HepG2 (cell line): ENCODE measurements at regions of chr5 and their contacts with region 1.

Region 1: DNA sequence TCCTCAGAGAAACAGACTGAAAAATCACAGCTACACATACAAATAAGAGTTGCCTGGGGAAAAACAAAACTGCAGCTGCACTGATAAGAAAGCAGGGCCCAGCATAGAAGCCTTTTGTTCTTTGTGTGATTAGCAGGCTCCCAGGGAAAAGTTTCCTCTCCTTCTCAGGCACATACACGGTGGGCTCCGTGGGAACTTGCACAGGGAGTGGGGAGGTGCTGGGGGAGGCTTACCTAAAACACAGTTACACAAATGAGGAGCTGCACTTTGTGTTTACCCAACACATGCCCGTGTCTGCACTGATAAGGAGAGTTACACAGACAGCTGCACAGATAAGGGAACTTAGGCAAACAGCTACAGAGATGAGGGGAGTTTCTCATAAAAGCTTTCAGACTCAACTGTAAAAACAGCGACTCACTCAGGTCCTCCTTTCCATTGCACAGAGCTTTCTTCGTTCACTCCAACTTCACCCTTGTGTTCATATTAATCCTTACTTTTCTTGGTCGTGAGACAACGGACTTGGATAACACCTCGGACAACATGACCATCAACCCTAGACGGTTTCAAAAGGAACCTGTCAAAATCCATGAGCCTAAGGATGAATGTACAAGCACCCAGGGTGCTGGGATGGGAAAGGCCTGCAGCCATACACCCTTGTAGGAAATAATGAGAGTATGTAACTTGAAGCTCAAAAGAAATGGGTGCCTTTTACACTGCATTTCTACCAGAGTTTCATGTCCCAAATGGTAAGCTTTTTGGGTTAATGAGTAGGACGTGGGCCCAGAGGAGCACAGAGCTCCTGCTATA is 50.8 kb downstream of the SERINC5 start:
- DNase-seq: peak; percentile 95
- ATAC-seq: peak; percentile 95
- H3K4me3 ChIP-seq: peak overlapping the region; percentile 5 to 39 (median 19); a peak in 2 of 6 replicates
- H3K27ac ChIP-seq: peak overlapping the region; percentile 58
- H3K4me1 ChIP-seq: peaks cover 66% of the 10 kb centered on the region
- H3K27me3 ChIP-seq: no peaks in the 10 kb centered on the region
- CTCF ChIP-seq: peak; percentile 64
- EP300 ChIP-seq: peak in 1 of 2 experiments; percentile 91; a peak in 3 of 4 replicates
- POLR2A ChIP-seq: no peak
- RAD21 ChIP-seq: peak; percentile 46; the same call in 1 of the 2 replicates

Region 2: DNA sequence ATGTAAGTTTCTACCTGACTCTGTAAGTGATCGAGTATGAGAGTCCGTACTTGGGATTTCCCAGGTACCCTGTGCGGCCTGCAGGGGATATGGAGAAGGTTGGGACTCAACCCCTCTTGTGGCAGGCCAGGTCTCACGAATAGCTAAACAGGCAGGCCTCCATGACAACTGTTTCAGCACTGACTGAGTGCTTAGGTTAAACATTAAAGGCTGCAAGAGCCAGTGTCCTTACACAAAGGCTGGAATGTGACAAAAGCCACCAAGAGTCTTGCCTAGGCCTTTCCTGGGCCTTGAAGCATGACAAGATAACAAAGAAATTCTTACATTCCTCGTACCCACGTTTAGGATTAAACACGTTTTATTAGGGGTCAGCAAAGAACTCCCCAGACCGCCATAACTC is 111.2 kb before region 1 on chr5:
- CTCF ChIA-PET with region 1: no interaction called
- POLR2A ChIA-PET with region 1: interaction called, 4 read pairs
- in situ Hi-C with region 1: no loop called
- intact Hi-C with region 1: loop called (anchors 1 kb)
- DNase-seq: peak; percentile 91
- ATAC-seq: peak; percentile 95
- H3K4me3 ChIP-seq: 0 out of 6 replicates have a peak overlapping the region, but pooled peaks of 1 of the 3 experiments have one; percentile 13
- H3K27ac ChIP-seq: peak overlapping the region; percentile 68
- H3K4me1 ChIP-seq: peaks cover 60% of the 10 kb centered on the region
- H3K27me3 ChIP-seq: 0 out of 5 replicates have a peak, but pooled peaks cover 0 to 2% of the 10 kb centered on the region in 2 experiments
- CTCF ChIP-seq: peak; percentile 48
- EP300 ChIP-seq: peak in 1 of 2 experiments; percentile 17; a peak in 1 of 4 replicates
- POLR2A ChIP-seq: no peak
- RAD21 ChIP-seq: peak; percentile 67

Region 3: DNA sequence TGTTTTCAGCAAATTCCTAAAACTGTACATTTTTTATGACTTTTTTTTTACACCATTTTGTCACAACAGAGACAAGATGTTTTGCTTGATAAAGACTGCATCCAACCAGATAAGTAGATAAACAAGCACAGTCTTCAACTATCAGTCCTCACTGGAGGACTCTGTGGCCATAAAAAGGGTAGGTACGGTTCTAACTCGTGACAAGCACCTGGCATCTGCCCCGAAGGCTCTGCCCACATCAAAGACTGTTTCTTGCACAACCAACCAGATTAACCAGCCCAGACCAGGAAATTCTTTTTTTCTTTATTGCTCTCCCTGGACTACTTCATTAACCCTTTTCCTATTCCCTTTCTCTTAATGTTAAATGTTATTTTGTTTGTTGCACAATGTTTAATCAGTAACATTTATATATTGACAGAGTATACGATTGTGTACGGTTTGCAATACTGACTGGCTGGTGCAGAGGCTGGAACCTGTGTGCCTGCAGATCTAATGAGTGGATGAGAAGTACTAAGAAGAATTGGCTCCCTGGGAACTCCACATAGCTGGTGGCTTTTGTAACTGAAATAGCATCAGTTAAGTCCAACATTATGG is 23.3 kb before region 1 on chr5:
- CTCF ChIA-PET with region 1: no interaction called
- POLR2A ChIA-PET with region 1: interaction called, 23 read pairs
- in situ Hi-C with region 1: no loop called
- intact Hi-C with region 1: loop called (anchors 1 kb)
- DNase-seq: peak; percentile 90
- ATAC-seq: peak; percentile 39
- H3K4me3 ChIP-seq: no peak overlapping the region
- H3K27ac ChIP-seq: peak overlapping the region; percentile 83
- H3K4me1 ChIP-seq: peaks cover 61% of the 10 kb centered on the region
- H3K27me3 ChIP-seq: no peaks in the 10 kb centered on the region
- CTCF ChIP-seq: no peak
- EP300 ChIP-seq: peak in 1 of 2 experiments; percentile 87; a peak in 2 of 4 replicates
- POLR2A ChIP-seq: no peak
- RAD21 ChIP-seq: no peak

Region 4: DNA sequence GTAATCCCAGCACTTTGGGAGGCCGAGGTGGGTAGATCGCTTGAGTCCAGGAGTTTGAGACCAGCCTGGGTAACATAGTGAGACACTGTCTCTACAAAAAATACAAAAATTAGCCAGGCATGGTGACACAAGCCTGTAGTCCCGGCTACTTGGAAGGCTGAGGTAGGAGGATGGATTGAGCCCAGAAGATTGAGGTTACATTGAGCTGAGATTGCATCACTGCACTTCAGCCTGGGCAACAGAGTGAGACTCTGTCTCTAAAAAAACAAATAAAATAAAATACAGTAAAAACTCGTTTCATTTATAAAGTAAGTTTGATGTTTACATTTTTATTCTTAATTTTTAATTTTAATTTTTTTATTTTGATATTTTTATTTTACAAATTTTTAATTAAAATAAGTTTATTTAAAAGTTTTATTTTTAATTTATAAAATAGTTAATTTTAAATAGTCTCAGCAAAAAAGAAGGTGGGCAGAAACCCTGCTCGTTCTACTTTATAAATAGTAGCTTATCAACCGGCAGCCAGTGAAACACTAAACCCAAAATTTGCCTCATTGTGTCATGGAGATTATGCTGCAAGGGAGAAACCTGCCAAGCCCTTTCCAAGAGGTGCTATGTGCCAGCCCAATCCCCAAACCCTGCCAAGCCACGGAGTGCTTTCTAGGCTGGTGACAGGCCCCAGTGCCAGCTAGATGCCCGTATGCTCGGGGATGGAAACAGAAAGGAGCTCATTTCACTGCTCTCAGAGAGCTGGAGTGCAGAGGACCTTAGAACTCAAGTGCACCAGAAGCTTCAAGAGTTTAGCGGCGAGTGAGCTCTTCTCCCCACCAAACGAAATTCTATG is 12.0 kb after region 1 on chr5:
- CTCF ChIA-PET with region 1: no interaction called
- POLR2A ChIA-PET with region 1: interaction called, 15 read pairs
- in situ Hi-C with region 1: no loop called
- intact Hi-C with region 1: no loop called
- DNase-seq: no peak
- ATAC-seq: no peak
- H3K4me3 ChIP-seq: no peak overlapping the region
- H3K27ac ChIP-seq: peak overlapping the region; percentile 55
- H3K4me1 ChIP-seq: peaks cover 78% of the 10 kb centered on the region
- H3K27me3 ChIP-seq: no peaks in the 10 kb centered on the region
- CTCF ChIP-seq: no peak
- EP300 ChIP-seq: no peak
- POLR2A ChIP-seq: no peak
- RAD21 ChIP-seq: no peak

Region 5: GRCh38 chr5:80246001-80246758 is 41.2 kb after region 1 on chr5:
- CTCF ChIA-PET with region 1: no interaction called
- POLR2A ChIA-PET with region 1: interaction called, 13 read pairs
- in situ Hi-C with region 1: no loop called
- intact Hi-C with region 1: loop called (anchors 2 kb)
- DNase-seq: peak; percentile 69
- ATAC-seq: peak; percentile 31
- H3K4me3 ChIP-seq: no peak overlapping the region
- H3K27ac ChIP-seq: peak overlapping the region; percentile 62
- H3K4me1 ChIP-seq: peaks cover 60% of the 10 kb centered on the region
- H3K27me3 ChIP-seq: no peaks in the 10 kb centered on the region
- CTCF ChIP-seq: no peak
- EP300 ChIP-seq: peak in 1 of 2 experiments; percentile 24; a peak in 1 of 4 replicates
- POLR2A ChIP-seq: no peak
- RAD21 ChIP-seq: no peak

Region 6: DNA sequence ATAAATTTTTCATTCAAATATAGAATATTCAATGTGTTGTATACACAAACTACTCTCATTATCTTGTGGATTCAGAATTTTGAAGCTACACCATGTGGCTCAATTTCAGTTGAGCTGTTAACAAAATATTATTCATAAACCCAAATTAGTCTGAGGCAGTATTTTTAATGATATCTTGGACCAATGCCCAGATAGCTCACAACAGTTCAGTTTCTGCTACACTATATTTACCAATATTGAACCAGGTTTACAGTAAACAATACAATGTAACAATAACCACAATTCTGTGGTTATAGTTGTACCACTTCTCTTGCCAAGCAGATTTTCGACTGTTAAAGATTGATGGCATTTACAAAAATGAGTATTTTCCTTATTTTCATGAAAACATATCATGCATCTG is 1446.0 kb after region 1 on chr5:
- CTCF ChIA-PET with region 1: no interaction called
- POLR2A ChIA-PET with region 1: no interaction called
- in situ Hi-C with region 1: no loop called
- intact Hi-C with region 1: no loop called
- DNase-seq: no peak
- ATAC-seq: no peak
- H3K4me3 ChIP-seq: no peak overlapping the region
- H3K27ac ChIP-seq: no peak overlapping the region
- H3K4me1 ChIP-seq: no peaks in the 10 kb centered on the region
- H3K27me3 ChIP-seq: no peaks in the 10 kb centered on the region
- CTCF ChIP-seq: no peak
- EP300 ChIP-seq: no peak
- POLR2A ChIP-seq: no peak
- RAD21 ChIP-seq: no peak